Natural killer cell (primary cell): ENCODE measurements at regions of chr5 and their contacts with region 1.

Region 1: GRCh38 chr5:59188419-59189225 is 605.7 kb downstream of the RAB3C start:
- DNase-seq: peak; percentile 35 to 83
- ATAC-seq: peak; percentile 84 to 91 (median 91)
- H3K4me3 ChIP-seq: no peak overlapping the region
- H3K4me3 Mint-ChIP-seq: peak overlapping the region; percentile 4
- H3K27ac ChIP-seq: no peak overlapping the region
- H3K27ac Mint-ChIP-seq: peak overlapping the region in 1 of 2 donors; percentile 49
- H3K4me1 ChIP-seq: peaks cover 4% of the 10 kb centered on the region
- H3K4me1 Mint-ChIP-seq: peaks cover 7% of the 10 kb centered on the region in 2 donors
- H3K27me3 ChIP-seq: peaks cover 4% of the 10 kb centered on the region
- H3K27me3 Mint-ChIP-seq: peaks cover 3 to 7% of the 10 kb centered on the region in 2 donors
- CTCF ChIP-seq: peak; percentile 93

Region 2: GRCh38 chr5:59367791-59368394 is 179.3 kb after region 1 on chr5:
- intact Hi-C with region 1: loop called (anchors 1 kb)
- DNase-seq: peak; percentile 30 to 69
- ATAC-seq: peak in 2 of 3 donors; percentile 71 to 77
- H3K4me3 ChIP-seq: no peak overlapping the region
- H3K4me3 Mint-ChIP-seq: no peak overlapping the region
- H3K27ac ChIP-seq: no peak overlapping the region
- H3K27ac Mint-ChIP-seq: no peak overlapping the region
- H3K4me1 ChIP-seq: no peaks in the 10 kb centered on the region
- H3K4me1 Mint-ChIP-seq: no peaks in the 10 kb centered on the region
- H3K27me3 ChIP-seq: no peaks in the 10 kb centered on the region
- H3K27me3 Mint-ChIP-seq: peaks cover 0 to 4% of the 10 kb centered on the region in 2 donors
- CTCF ChIP-seq: peak; percentile 77

Region 3: DNA sequence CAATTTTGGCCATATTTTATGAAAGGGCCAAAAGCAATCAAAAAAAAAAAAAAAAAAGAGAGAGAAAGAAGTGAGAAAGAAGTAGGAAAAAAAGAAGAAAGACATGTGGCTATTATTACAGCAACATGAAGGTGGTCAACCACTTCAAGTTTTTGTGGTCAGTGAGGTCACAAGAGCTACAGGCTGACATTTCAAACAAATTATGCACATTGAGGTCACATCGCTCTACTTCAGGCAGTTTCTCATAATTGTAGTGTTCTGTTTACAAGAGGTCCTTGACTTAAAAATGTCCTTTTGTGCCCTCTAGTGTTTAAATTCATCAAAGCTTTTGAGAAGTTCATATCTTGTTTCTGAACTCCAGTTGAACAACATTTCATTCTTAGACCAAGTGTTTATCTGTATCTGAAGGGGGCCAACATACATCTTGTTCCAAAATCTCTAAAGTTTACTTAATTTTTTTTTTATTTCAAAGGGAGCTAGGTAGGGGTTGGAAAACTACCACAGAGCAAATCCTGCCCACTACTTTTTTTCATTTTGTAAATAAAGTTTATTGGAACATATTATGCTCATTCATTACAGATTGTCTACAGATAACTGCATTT is 191.8 kb after region 1 on chr5:
- intact Hi-C with region 1: loop called (anchors 1 kb)
- DNase-seq: peak in 1 of 2 donors; percentile 65
- ATAC-seq: peak; percentile 90 to 97 (median 96)
- H3K4me3 ChIP-seq: no peak overlapping the region
- H3K4me3 Mint-ChIP-seq: peak overlapping the region; percentile 69
- H3K27ac ChIP-seq: no peak overlapping the region
- H3K27ac Mint-ChIP-seq: peak overlapping the region; percentile 66 to 74
- H3K4me1 ChIP-seq: no peaks in the 10 kb centered on the region
- H3K4me1 Mint-ChIP-seq: peaks cover 0 to 6% of the 10 kb centered on the region in 2 donors
- H3K27me3 ChIP-seq: no peaks in the 10 kb centered on the region
- H3K27me3 Mint-ChIP-seq: peaks cover 0 to 3% of the 10 kb centered on the region in 2 donors
- CTCF ChIP-seq: peak; percentile 59

Region 4: DNA sequence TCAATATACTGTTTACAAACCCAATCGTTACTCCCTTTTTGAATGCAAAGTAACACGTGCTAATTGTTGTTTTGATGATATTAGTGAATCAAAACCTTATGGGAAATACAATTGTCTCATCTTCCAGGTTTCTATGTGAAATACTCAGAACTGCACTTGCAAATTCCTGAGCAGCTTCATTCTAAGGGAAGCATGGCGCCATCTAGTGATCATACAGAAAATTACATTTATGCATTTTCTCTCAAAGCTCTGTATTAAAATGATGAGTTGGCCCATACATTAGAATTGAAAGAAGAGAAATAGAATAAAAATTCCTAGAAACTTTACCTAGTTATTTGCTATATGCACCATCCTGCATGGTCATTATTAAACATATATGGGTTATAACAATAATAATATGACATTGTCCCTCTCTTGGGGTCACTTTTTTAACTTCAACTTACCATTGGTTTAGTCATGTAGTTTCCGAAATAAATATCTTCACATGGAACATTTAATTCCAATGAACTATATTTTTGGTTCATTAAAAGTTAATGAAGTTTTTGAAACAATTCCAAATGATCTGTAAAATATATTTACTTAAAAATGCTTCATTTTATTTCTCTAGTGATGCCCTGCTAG is 484.9 kb after region 1 on chr5:
- intact Hi-C with region 1: loop called (anchors 5 kb)
- DNase-seq: peak in 1 of 2 donors; percentile 61
- ATAC-seq: peak in 2 of 3 donors; percentile 38 to 53
- H3K4me3 ChIP-seq: no peak overlapping the region
- H3K4me3 Mint-ChIP-seq: no peak overlapping the region
- H3K27ac ChIP-seq: no peak overlapping the region
- H3K27ac Mint-ChIP-seq: no peak overlapping the region
- H3K4me1 ChIP-seq: no peaks in the 10 kb centered on the region
- H3K4me1 Mint-ChIP-seq: no peaks in the 10 kb centered on the region
- H3K27me3 ChIP-seq: peaks cover 2% of the 10 kb centered on the region
- H3K27me3 Mint-ChIP-seq: peaks cover 0 to 5% of the 10 kb centered on the region in 2 donors
- CTCF ChIP-seq: peak; percentile 94

Region 5: DNA sequence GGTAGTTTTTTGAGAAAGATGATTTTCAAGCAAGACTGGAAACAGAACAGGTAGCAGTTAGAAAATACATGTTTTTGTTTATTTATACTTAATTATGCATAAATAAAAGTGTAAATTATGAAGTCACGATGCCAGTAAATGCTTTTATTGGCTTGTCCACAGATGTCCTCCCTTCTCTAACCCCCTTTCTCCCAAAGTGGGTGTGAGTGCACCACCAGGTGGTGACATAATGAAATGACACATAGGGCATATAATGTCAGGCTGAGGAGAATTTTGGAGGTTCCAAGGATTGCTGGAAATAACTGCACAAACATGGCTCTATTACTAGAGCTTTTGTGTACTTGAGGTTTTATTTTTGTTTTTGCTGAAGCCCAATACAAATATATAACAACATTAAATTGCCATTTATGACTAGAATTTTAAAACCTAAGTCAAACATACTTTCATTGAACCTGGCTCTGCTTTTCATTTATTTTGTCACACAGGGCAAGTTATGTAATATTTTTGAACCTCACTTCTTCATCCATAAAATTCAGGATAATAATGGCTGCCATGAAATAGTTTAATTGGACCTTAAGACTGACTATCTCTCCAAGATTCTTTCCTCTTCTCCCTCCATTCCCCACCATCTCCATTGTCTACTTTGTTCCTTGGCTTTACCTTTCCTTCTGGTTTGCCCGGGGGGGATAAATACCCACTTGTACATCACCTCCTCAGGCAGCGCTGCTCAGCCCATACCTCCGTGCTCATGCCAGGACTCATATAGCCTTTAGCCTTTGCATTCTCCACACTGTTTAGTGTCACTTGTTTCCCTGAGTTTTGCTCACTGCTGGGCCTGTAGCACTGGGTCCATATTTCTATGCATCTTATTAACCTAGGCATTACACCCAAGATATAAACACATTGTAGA is 536.1 kb after region 1 on chr5:
- intact Hi-C with region 1: loop called (anchors 5 kb)
- DNase-seq: peak in 1 of 2 donors; percentile 25
- ATAC-seq: peak in 2 of 3 donors; percentile 58 to 70
- H3K4me3 ChIP-seq: no peak overlapping the region
- H3K4me3 Mint-ChIP-seq: no peak overlapping the region
- H3K27ac ChIP-seq: no peak overlapping the region
- H3K27ac Mint-ChIP-seq: no peak overlapping the region
- H3K4me1 ChIP-seq: no peaks in the 10 kb centered on the region
- H3K4me1 Mint-ChIP-seq: no peaks in the 10 kb centered on the region
- H3K27me3 ChIP-seq: no peaks in the 10 kb centered on the region
- H3K27me3 Mint-ChIP-seq: no peaks in the 10 kb centered on the region
- CTCF ChIP-seq: peak; percentile 50

Region 6: GRCh38 chr5:59799668-59800346 is 611.2 kb after region 1 on chr5:
- intact Hi-C with region 1: loop called (anchors 2 kb)
- DNase-seq: peak in 1 of 2 donors; percentile 70
- ATAC-seq: peak; percentile 73 to 88 (median 80)
- H3K4me3 ChIP-seq: no peak overlapping the region
- H3K4me3 Mint-ChIP-seq: no peak overlapping the region
- H3K27ac ChIP-seq: peak overlapping the region; percentile 2
- H3K27ac Mint-ChIP-seq: no peak overlapping the region
- H3K4me1 ChIP-seq: no peaks in the 10 kb centered on the region
- H3K4me1 Mint-ChIP-seq: no peaks in the 10 kb centered on the region
- H3K27me3 ChIP-seq: no peaks in the 10 kb centered on the region
- H3K27me3 Mint-ChIP-seq: peaks cover 0 to 4% of the 10 kb centered on the region in 2 donors
- CTCF ChIP-seq: peak; percentile 86